ENCODE measurements at regions of chr1 and their contacts with region 1.

Region 1: GRCh38 chr1:206766251-206766856 is 4.2 kb upstream of the IL19 start:
- DNase-seq: peak; percentile 47 to 89 (median 77)
- ATAC-seq: peak; percentile 77
- H3K4me3 ChIP-seq: peak overlapping the region; percentile 3 to 9
- H3K4me3 Mint-ChIP-seq: peak overlapping the region; percentile 61
- H3K27ac ChIP-seq: no peak overlapping the region
- H3K27ac Mint-ChIP-seq: peak overlapping the region; percentile 82
- H3K4me1 ChIP-seq: peaks cover 63% of the 10 kb centered on the region
- H3K4me1 Mint-ChIP-seq: peaks cover 61% of the 10 kb centered on the region
- H3K27me3 ChIP-seq: no peaks in the 10 kb centered on the region
- H3K27me3 Mint-ChIP-seq: no peaks in the 10 kb centered on the region
- CTCF ChIP-seq: no peak

Region 2: GRCh38 chr1:206784471-206784903 is 18.1 kb after region 1 on chr1:
- CTCF ChIA-PET with region 1: interaction called, 4 read pairs
- POLR2A ChIA-PET with region 1: interaction called, 13 read pairs
- intact Hi-C with region 1: loop called (anchors 1 to 2 kb)
- DNase-seq: peak in 8 of 9 experiments; percentile 43 to 78 (median 62)
- ATAC-seq: peak; percentile 88
- H3K4me3 ChIP-seq: no peak overlapping the region
- H3K4me3 Mint-ChIP-seq: peak overlapping the region; percentile 63
- H3K27ac ChIP-seq: no peak overlapping the region
- H3K27ac Mint-ChIP-seq: peak overlapping the region; percentile 86
- H3K4me1 ChIP-seq: peaks cover 56% of the 10 kb centered on the region
- H3K4me1 Mint-ChIP-seq: peaks cover 62% of the 10 kb centered on the region
- H3K27me3 ChIP-seq: no peaks in the 10 kb centered on the region
- H3K27me3 Mint-ChIP-seq: no peaks in the 10 kb centered on the region
- CTCF ChIP-seq: no peak

Region 3: GRCh38 chr1:206797534-206798383 is 31.4 kb after region 1 on chr1:
- CTCF ChIA-PET with region 1: interaction called, 16 read pairs
- POLR2A ChIA-PET with region 1: interaction called, 18 read pairs
- intact Hi-C with region 1: loop called in 1 of 2 experiments (anchors 2 kb)
- DNase-seq: peak in 5 of 9 experiments; percentile 37 to 72 (median 62)
- ATAC-seq: peak; percentile 21
- H3K4me3 ChIP-seq: no peak overlapping the region
- H3K4me3 Mint-ChIP-seq: no peak overlapping the region
- H3K27ac ChIP-seq: no peak overlapping the region
- H3K27ac Mint-ChIP-seq: no peak overlapping the region
- H3K4me1 ChIP-seq: peaks cover 34% of the 10 kb centered on the region
- H3K4me1 Mint-ChIP-seq: peaks cover 57% of the 10 kb centered on the region
- H3K27me3 ChIP-seq: no peaks in the 10 kb centered on the region
- H3K27me3 Mint-ChIP-seq: no peaks in the 10 kb centered on the region
- CTCF ChIP-seq: peak; percentile 28

Region 4: DNA sequence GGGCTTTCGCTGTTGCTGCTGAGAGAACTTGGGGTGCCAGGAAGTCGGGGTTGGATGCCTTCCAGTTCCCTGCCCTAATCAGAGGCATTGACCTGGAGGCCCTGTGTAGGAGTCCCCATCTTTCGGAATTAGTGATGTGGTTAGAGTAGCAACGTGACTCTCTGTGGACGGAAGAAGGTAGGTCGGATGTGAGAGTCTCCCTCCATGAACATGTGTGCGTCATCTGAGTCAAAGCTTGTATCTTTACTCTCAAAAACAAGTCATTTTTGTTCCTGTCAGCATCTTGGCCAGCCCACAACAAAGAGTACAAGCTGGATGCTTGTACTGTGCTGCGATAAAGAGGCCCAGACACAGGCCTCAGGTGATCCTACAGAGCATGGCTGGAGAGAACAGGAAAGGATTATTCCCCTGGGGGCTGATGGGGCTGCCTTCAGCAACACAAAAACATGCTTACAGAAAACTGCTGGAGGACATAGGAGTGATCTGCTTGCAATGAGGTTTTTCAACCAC is 36.9 kb after region 1 on chr1:
- CTCF ChIA-PET with region 1: interaction called, 16 read pairs
- POLR2A ChIA-PET with region 1: interaction called, 18 read pairs
- intact Hi-C with region 1: loop called (anchors 1 to 2 kb)
- DNase-seq: peak; percentile 59 to 98 (median 74)
- ATAC-seq: peak; percentile 91
- H3K4me3 ChIP-seq: no peak overlapping the region
- H3K4me3 Mint-ChIP-seq: peak overlapping the region; percentile 40
- H3K27ac ChIP-seq: peak overlapping the region; percentile 51 to 83
- H3K27ac Mint-ChIP-seq: peak overlapping the region; percentile 96
- H3K4me1 ChIP-seq: peaks cover 46% of the 10 kb centered on the region
- H3K4me1 Mint-ChIP-seq: peaks cover 71% of the 10 kb centered on the region
- H3K27me3 ChIP-seq: no peaks in the 10 kb centered on the region
- H3K27me3 Mint-ChIP-seq: no peaks in the 10 kb centered on the region
- CTCF ChIP-seq: no peak

Region 5: DNA sequence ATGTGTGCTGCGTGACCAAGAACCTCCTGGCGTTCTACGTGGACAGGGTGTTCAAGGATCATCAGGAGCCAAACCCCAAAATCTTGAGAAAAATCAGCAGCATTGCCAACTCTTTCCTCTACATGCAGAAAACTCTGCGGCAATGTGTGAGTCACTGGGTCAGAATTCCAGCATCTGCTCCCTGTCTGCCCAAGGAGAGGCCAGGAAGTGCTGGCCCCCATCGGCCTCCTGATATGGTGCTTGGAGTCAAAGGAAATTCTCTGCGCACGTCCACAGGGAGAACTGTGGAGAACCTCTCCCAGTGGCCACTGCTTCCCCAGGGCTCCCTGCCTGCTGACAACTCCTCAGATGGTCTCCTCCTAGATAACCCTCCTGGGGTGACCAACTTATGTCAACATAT is 73.5 kb after region 1 on chr1:
- CTCF ChIA-PET with region 1: no interaction called
- POLR2A ChIA-PET with region 1: no interaction called
- intact Hi-C with region 1: no loop called
- DNase-seq: no peak
- ATAC-seq: no peak
- H3K4me3 ChIP-seq: no peak overlapping the region
- H3K4me3 Mint-ChIP-seq: no peak overlapping the region
- H3K27ac ChIP-seq: no peak overlapping the region
- H3K27ac Mint-ChIP-seq: no peak overlapping the region
- H3K4me1 ChIP-seq: no peaks in the 10 kb centered on the region
- H3K4me1 Mint-ChIP-seq: no peaks in the 10 kb centered on the region
- H3K27me3 ChIP-seq: no peaks in the 10 kb centered on the region
- H3K27me3 Mint-ChIP-seq: no peaks in the 10 kb centered on the region
- CTCF ChIP-seq: no peak